ENCODE measurements at regions of chr4 and their contacts with region 1.

Region 1: DNA sequence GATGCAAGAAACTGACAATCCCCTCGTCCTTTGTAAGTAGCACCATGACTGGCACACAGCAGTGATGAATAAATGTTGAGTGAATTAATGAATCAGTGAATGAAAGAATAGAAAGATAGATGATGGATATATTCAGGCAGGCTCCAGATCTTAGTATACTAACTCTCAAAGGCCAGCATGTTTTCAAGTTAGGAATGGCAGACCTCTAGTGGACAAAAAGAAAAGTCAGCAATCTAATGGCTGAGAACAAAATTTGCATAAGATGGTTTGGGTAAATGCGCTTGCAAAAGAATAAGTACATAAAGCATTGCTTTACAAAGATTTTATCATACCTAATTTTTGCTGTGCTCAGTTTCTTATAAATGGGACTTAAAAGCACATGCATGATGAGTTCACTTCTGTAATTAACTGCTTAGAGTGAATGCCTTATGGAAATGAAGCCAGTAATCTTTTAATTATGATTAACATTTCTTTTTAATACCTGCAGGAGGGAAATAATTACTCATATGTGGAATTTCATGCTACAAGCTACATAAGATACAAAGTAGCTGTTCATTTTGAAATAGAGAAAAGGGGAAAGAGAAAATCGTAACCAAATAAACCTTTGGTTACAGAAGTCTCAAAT is 126.9 kb upstream of the GPRIN3 start:
- DNase-seq: no peak
- H3K4me3 Mint-ChIP-seq: no peak overlapping the region
- H3K27ac Mint-ChIP-seq: no peak overlapping the region
- H3K4me1 Mint-ChIP-seq: peaks cover 20% of the 10 kb centered on the region
- H3K27me3 Mint-ChIP-seq: no peaks in the 10 kb centered on the region
- CTCF ChIP-seq: peak; percentile 24

Region 2: DNA sequence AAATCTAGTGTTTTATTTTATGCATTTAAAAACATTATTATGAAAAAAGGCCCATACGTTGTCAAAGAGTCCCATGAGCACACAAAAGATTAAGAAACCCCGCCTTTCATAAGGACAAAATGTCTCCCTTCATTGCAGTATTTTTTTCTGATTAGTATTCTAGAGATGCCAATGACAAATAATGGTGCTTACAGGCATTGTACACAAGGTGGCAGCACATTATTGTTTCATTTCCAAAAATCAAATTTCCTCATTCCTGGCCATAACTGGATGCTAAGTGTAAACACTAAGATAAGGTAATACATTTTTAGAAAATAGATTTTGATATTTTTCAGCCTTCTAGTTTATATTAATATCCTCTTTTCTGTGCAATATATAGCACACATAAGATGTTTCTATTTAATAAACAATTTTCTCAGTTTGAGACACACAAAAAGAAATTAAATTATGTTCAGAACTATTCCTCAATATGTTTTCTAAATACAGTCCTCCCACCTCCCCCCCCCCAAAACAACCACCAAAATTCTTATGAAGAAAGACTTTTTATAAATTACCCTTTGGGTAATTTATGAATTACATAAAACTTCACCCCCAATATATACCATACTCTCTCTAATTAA is 275.5 kb before region 1 on chr4:
- CTCF ChIA-PET with region 1: no interaction called
- intact Hi-C with region 1: loop called (anchors 1 kb)
- DNase-seq: peak; percentile 20
- H3K4me3 Mint-ChIP-seq: no peak overlapping the region
- H3K27ac Mint-ChIP-seq: no peak overlapping the region
- H3K4me1 Mint-ChIP-seq: no peaks in the 10 kb centered on the region
- H3K27me3 Mint-ChIP-seq: no peaks in the 10 kb centered on the region
- CTCF ChIP-seq: peak; percentile 16

Region 3: GRCh38 chr4:89226665-89227574 is 207.6 kb before region 1 on chr4:
- CTCF ChIA-PET with region 1: interaction called, 3 read pairs
- intact Hi-C with region 1: loop called (anchors 1 kb)
- DNase-seq: peak; percentile 75
- H3K4me3 Mint-ChIP-seq: no peak overlapping the region
- H3K27ac Mint-ChIP-seq: no peak overlapping the region
- H3K4me1 Mint-ChIP-seq: peaks cover 21% of the 10 kb centered on the region
- H3K27me3 Mint-ChIP-seq: no peaks in the 10 kb centered on the region
- CTCF ChIP-seq: peak; percentile 63

Region 4: GRCh38 chr4:89254847-89255246 is 179.6 kb before region 1 on chr4:
- CTCF ChIA-PET with region 1: no interaction called
- intact Hi-C with region 1: loop called (anchors 10 kb)
- DNase-seq: peak; percentile 41
- H3K4me3 Mint-ChIP-seq: no peak overlapping the region
- H3K27ac Mint-ChIP-seq: peak overlapping the region; percentile 8
- H3K4me1 Mint-ChIP-seq: no peaks in the 10 kb centered on the region
- H3K27me3 Mint-ChIP-seq: no peaks in the 10 kb centered on the region
- CTCF ChIP-seq: no peak

Region 5: DNA sequence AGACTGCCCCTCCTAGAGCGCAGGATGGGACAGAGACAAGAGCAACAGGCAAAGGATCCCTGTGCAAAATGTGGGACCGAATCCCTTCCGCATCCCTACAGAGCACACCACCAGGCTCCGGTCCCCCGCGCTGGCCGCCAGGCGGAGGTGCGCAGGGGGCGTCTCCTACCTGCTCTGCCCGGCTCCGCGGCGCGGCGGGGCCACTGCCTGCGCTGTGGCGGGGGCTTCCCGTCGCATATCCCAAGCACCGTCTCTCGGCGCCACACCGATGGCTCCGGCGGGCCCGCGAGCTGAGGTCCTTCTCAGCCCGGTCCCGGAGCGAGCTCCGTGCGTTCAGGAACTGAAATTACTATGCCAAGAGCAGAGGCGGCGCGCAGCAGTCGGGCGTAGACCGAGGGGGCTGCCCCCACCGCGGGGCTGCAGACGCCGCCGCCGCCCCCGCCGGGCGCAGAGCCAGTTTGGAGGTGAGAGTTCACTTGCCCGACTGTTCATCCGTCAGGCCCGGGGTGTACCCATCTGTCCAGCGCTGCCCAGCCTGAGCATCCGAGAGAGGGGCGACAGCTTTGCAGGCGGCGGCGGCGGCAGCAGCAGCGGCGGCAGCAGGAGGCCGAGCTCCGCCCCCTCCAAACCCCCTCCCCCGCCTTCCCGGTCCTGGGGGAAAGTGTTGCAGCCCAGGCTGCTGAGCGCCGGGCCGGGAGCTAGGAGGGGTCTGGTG is 126.9 kb before region 1 on chr4 and contains the start of gene GPRIN3:
- CTCF ChIA-PET with region 1: no interaction called
- intact Hi-C with region 1: loop called (anchors 2 kb)
- DNase-seq: peak; percentile 48
- H3K4me3 Mint-ChIP-seq: peak within 1 kb of the TSS; percentile 66
- H3K27ac Mint-ChIP-seq: peak within 1 kb of the TSS; percentile 26
- H3K4me1 Mint-ChIP-seq: peaks cover 22% of the 10 kb centered on the region
- H3K27me3 Mint-ChIP-seq: no peaks in the 10 kb centered on the region
- CTCF ChIP-seq: no peak
- total RNA-seq, gene GPRIN3: 6.8 and 7.6 TPM in 2 replicates

Region 6: GRCh38 chr4:89410687-89411086 is 23.8 kb before region 1 on chr4:
- CTCF ChIA-PET with region 1: no interaction called
- intact Hi-C with region 1: no loop called
- DNase-seq: no peak
- H3K4me3 Mint-ChIP-seq: no peak overlapping the region
- H3K27ac Mint-ChIP-seq: no peak overlapping the region
- H3K4me1 Mint-ChIP-seq: no peaks in the 10 kb centered on the region
- H3K27me3 Mint-ChIP-seq: no peaks in the 10 kb centered on the region
- CTCF ChIP-seq: no peak